MCF 10A (cell line): ENCODE measurements at regions of chr6 and their contacts with region 1.

Region 1: DNA sequence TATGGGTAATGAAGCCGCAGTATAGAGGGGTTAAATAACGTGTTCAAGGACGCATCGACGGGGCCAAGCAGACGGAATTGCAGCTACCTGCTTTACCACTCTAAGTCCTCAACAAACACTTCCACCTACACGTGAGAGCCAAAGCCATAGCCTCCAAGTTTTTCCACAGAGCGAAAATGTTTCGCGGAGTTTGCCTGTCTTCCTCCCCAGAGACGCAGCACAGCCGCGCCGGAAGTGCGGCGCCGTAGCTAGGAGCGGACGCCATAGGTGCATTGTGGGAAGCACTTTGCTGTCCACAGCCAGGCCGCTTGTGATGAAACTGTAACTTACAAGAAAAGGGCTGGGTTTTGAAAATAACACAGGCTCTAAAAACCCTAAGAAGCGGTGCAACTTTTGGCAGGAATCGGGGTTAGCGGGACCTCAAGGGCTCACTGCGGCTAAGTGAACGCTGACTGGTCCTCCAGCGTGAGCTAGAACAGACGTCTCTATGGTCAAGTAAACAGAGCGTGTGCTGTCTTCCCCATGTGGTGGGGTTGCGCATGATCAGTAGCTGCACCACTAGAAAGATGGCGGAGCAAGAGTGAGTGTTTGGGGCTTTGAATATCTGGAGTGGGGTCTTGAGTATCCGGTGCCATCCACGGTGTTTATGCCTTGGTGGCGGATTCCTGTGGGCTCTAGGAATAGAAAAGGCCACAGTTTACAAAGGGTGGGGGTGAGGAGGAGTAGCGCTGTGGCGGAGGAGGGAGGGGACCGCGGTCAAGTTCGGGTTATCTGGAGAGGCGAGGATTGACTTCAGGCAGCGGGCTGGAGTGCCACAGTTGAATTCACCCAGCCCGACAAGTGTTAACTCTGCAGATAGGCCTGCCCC is at the start of gene RPL7L1:
- DNase-seq: peak; percentile 93
- H3K4me3 Mint-ChIP-seq: peak within 1 kb of the TSS; percentile 98
- H3K27ac Mint-ChIP-seq: peak within 1 kb of the TSS; percentile 100
- H3K4me1 Mint-ChIP-seq: peaks cover 14% of the 10 kb centered on the region
- H3K27me3 Mint-ChIP-seq: no peaks in the 10 kb centered on the region
- CTCF ChIP-seq: no peak
- total RNA-seq, gene RPL7L1: 121 and 123 TPM in 2 replicates

Region 2: GRCh38 chr6:42075159-42075838 is 804.3 kb before region 1 on chr6:
- CTCF ChIA-PET with region 1: no interaction called
- POLR2A ChIA-PET with region 1: no interaction called
- intact Hi-C with region 1: loop called (anchors 5 kb)
- DNase-seq: peak; percentile 69
- H3K4me3 Mint-ChIP-seq: no peak overlapping the region
- H3K27ac Mint-ChIP-seq: no peak overlapping the region
- H3K4me1 Mint-ChIP-seq: no peaks in the 10 kb centered on the region
- H3K27me3 Mint-ChIP-seq: no peaks in the 10 kb centered on the region
- CTCF ChIP-seq: peak; percentile 82

Region 3: GRCh38 chr6:42563697-42564505 is 315.7 kb before region 1 on chr6 and contains the start of gene UBR2:
- CTCF ChIA-PET with region 1: no interaction called
- POLR2A ChIA-PET with region 1: interaction called, 7 read pairs
- intact Hi-C with region 1: loop called (anchors 10 kb)
- DNase-seq: peak; percentile 99
- H3K4me3 Mint-ChIP-seq: peak within 1 kb of the TSS; percentile 79
- H3K27ac Mint-ChIP-seq: peak within 1 kb of the TSS; percentile 81
- H3K4me1 Mint-ChIP-seq: peaks cover 18% of the 10 kb centered on the region
- H3K27me3 Mint-ChIP-seq: no peaks in the 10 kb centered on the region
- CTCF ChIP-seq: no peak
- total RNA-seq, gene UBR2: 20.1 and 23.2 TPM in 2 replicates

Region 4: GRCh38 chr6:42692137-42692911 is 187.3 kb before region 1 on chr6:
- CTCF ChIA-PET with region 1: interaction called, 8 read pairs
- POLR2A ChIA-PET with region 1: interaction called, 5 read pairs
- intact Hi-C with region 1: loop called (anchors 1 kb)
- DNase-seq: peak; percentile 63
- H3K4me3 Mint-ChIP-seq: no peak overlapping the region
- H3K27ac Mint-ChIP-seq: peak overlapping the region; percentile 39
- H3K4me1 Mint-ChIP-seq: peaks cover 19% of the 10 kb centered on the region
- H3K27me3 Mint-ChIP-seq: no peaks in the 10 kb centered on the region
- CTCF ChIP-seq: no peak

Region 5: DNA sequence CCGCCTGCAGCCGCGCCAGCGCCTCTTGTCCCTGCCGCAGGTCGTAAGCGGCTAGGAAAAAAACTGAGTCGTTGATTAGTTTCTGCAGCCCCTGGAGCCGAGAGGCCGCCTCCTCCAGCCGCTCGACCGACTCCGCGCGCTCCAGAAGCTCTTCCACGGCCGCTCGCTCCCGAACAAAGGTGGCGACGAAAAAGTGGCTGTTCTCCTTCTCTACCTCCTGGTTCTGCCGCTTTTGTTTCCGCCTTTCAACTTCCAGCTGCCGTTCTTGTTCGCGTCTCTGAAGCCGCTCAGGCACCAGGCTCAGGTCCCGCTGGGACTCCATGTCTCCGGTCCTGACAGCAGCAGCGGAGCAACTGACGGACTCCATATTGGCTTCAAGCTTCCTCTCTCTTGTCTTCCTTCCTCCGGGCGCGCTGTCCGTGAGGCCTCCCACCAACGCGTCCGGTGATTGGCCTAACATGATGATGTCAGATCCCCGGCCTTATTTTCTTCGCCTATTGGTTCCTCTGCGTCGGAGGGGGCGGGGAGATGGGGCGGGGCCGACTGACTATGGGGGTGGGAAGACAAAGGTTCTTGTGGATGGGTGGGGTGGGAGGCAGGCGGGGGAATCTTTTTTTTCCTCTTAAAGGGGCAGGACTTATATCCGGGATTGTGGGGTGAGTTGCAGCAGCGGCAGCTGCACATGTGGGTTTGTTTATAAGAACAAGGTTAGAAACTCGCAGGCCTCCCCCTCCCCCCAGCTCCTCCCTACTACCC is 133.7 kb before region 1 on chr6 and contains the start of gene TBCC:
- CTCF ChIA-PET with region 1: interaction called, 5 read pairs
- POLR2A ChIA-PET with region 1: interaction called, 77 read pairs
- intact Hi-C with region 1: loop called (anchors 1 kb)
- DNase-seq: peak; percentile 99
- H3K4me3 Mint-ChIP-seq: peak within 1 kb of the TSS; percentile 83
- H3K27ac Mint-ChIP-seq: peak within 1 kb of the TSS; percentile 95
- H3K4me1 Mint-ChIP-seq: peaks cover 24% of the 10 kb centered on the region
- H3K27me3 Mint-ChIP-seq: no peaks in the 10 kb centered on the region
- CTCF ChIP-seq: no peak
- total RNA-seq, gene TBCC: 13.7 and 19.4 TPM in 2 replicates

Region 6: DNA sequence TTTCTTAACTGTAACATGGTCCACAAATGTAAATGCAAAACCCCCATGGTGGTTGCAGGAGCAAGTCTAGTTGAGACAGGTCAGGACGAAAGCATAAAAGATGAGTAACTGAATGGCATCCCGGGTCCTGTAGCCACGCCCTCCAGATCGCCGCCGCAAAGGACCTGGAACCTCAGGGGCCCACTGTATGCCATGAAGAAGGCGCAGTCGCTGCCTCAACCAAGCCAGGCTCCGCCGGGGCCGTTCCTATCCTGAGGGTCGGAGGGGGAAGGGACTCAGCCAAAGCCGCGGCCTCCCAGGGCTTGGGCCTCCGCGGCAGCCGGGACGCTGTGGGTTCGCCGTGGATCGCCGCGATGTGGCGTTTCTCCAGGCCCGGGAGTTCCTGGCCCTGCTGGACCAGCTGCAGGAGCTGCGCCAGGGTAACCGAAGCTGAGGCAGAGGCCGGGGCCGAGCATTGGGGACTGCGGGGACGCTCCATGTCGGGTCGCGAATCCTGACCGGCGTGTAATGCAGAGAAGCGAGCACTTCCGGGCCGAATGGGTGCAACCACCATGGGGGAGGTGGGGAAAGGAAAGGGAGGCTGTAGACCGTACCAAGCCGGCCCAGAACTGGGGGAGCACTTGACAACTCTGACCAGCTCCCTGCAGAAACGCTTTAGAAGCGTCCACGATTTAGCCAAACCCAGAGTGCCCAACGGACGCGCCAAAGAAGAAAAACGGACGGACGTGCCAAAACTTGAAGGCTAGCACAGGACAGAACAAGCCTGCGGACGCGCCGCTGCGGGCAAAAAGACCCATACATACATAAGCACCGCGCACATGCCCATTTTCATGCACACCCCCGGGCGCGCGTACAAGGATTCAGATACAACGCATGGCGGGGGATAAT is 10.9 kb after region 1 on chr6:
- CTCF ChIA-PET with region 1: interaction called, 5 read pairs
- POLR2A ChIA-PET with region 1: interaction called, 89 read pairs
- intact Hi-C with region 1: no loop called
- DNase-seq: peak; percentile 98
- H3K4me3 Mint-ChIP-seq: peak overlapping the region; percentile 89
- H3K27ac Mint-ChIP-seq: peak overlapping the region; percentile 80
- H3K4me1 Mint-ChIP-seq: no peaks in the 10 kb centered on the region
- H3K27me3 Mint-ChIP-seq: no peaks in the 10 kb centered on the region
- CTCF ChIP-seq: no peak